Posterior cingulate gyrus (tissue), 11 donors: ENCODE measurements at regions of chr15 and their contacts with region 1.

Region 1: DNA sequence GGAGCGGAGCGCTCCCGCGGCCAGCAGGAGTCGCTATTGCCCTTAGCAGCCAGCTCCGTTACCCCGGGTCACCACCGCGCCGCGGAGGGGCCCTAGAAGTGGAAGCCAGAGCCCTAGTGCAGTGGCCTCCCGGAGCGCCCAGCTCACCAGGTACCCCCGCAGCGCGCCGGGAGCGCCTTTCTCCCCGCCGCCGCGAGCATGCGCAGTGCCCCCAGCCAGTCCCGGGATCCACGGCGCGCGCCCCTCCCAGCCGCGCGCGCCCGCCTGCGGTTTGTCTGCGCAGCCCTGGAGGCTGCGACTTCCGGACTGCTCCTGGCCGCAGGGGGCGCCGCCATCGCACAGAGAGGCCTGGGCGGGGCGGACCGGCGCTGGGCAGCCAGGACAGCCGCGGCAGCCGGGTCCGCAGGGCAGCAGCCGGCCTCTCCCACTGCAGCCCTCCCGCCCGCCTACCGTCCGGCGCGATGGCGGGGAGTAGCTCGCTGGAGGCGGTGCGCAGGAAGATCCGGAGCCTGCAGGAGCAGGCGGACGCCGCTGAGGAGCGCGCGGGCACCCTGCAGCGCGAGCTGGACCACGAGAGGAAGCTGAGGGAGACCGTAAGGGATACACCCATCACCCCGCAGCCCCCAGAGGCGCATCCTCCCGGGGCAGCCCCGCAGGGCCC is 5.7 kb downstream of the TPM1 start:
- DNase-seq: peak; percentile 71 to 97 (median 82)

Region 2: DNA sequence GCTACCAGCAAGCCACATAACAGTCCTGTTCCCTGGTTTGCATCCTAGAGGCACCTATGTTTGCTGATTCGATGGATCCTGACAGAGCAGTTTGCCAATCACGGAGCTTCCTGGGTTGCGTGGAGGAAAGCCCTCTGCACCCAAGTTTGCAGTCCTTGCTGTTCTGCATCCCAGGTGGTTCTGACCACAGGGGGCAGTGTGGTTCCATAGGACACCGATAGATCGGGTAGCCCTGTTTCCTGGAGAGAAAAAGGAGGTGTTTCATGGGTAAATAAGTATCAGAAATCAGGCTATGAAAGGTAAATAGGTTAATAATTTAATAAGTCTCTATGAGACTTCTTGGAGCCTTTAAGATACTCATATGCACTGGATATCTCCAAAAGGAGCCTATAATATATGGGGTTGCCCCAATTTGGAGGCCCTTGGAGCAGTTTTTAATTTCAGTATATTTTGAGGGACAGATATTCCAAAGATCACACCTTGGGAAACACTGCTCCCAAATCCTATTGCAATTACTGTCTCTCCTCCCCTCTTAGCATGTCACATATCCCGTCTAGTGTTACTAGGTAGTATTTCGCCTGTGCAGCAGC is 200.2 kb before region 1 on chr15:
- intact Hi-C with region 1: loop called (anchors 1 kb)
- DNase-seq: peak; percentile 67 to 97 (median 86)

Region 3: DNA sequence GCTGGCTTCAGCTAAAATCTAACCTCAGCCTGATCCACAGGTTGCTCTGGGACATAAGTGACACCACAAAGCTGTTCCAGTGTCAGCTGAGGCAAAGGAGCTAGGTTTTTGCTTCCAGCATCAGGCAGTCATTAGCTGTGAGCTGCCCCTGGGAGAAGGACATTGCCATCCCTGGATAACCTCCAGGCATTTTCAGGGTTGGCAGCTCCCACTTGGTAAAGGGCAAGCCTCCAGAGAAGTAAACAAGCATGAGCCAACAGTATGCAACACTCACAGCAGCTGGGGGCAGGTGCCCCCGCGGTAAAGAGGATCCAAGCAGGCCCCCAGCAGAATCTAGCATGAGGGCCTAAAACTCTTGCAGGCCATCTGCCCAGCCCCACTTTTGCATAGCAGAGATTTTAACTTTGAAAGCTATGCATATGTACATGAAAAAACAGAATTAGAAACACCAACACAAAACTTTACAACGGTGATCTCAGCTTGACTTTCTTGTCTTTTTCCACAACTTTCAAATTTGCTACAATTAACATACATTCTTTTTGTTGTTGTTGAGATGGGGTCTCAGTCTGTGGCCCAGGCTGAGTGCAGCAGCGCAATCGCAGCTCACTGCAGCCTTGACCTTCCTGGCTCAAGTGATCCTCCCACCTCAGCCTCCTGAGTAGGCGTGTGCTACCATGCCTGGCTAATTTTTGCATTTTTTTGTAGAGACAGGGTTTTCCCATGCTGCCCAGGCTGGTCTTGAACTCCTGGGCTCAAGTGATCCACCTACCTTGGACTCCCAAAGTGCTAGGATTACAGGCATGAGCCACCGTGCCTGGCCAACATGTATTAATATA is 89.5 kb before region 1 on chr15:
- intact Hi-C with region 1: no loop called
- DNase-seq: no peak

Region 4: DNA sequence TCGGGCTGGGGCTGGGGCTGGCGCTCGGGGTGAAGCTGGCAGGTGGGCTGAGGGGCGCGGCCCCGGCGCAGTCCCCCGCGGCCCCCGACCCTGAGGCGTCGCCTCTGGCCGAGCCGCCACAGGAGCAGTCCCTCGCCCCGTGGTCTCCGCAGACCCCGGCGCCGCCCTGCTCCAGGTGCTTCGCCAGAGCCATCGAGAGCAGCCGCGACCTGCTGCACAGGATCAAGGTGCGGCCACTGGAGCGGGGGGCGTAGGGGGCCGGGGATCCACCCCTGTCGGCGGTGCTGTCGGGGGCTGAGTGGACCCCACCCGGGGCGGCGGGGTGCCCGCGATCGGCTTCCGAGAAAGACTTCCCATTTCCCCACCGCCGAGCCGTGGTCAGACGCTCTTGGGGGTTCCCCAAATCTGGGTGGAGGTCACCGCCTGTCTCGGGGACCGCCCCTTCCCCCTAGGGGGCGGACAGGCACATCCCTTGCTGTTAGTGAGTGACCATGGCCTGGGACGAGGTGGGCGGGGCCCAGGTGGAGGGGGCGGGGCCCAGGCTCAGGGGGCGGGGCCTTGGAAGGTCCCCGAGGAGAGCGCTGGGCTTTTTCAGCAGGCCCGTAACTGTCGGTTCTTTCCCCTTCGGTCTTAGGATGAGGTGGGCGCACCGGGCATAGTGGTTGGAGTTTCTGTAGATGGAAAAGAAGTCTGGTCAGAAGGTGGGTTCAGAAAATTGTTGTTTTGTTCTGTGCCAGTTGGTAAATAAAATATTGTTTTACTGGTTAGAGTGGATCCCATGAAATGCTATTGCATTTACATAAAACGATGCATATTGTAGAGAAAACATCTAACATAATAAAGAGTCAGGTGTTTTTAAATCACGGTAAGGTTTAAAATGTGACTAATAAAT is 74.0 kb after region 1 on chr15:
- intact Hi-C with region 1: no loop called
- DNase-seq: peak; percentile 36 to 96 (median 68)

Region 5: GRCh38 chr15:63264688-63265302 is 216.6 kb after region 1 on chr15:
- intact Hi-C with region 1: no loop called
- DNase-seq: no peak

Region 6: GRCh38 chr15:63402498-63403253 is 354.4 kb after region 1 on chr15:
- intact Hi-C with region 1: loop called (anchors 10 kb)
- DNase-seq: no peak